Sigmoid colon (tissue), 7 donors: ENCODE measurements at regions of chr11 and their contacts with region 1.

Region 1: DNA sequence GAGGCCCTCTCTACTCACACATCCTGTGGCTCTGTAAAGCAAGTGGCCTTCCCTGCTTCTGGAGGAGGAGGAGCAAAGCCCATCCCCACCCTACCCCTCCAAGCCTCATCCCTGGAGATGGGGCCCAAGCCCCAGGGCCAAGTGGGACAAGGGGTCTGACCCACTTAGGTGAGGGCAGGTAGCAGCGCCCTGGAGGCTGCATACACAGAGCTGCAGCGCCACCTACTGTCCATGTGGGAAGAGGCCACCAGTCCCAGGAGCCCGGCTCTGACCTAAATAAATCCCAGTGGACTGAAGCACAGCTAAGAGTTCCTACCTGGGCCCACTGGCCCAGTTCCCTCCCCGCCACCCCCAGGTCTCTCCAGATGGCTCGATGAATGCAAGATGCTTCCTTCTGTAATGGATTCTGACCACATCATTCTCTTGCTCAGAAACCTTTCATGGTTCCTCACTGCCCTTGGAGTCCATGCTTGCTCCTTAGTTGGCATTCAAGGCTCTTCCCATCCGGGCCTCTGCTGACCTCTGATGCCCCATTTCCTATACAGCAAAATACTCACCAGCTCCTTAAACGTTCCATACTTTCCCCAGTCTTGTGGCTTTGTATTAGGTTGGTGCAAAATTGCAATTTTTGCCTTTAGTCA is 62.1 kb downstream of the THAP12 start:
- DNase-seq: peak; percentile 89
- H3K4me3 ChIP-seq: no peak overlapping the region
- H3K27ac ChIP-seq: no peak overlapping the region
- H3K4me1 ChIP-seq: peaks cover 0 to 7% (median 3%) of the 10 kb centered on the region in 4 donors
- H3K27me3 ChIP-seq: peaks cover 11 to 25% (median 19%) of the 10 kb centered on the region in 3 donors
- CTCF ChIP-seq: peak; percentile 64 to 96 (median 92)
- EP300 ChIP-seq: no peak
- POLR2A ChIP-seq: no peak

Region 2: GRCh38 chr11:75797792-75798191 is 521.1 kb before region 1 on chr11:
- intact Hi-C with region 1: loop called (anchors 10 kb)
- DNase-seq: no peak
- H3K4me3 ChIP-seq: no peak overlapping the region
- H3K27ac ChIP-seq: no peak overlapping the region
- H3K4me1 ChIP-seq: no peaks in the 10 kb centered on the region
- H3K27me3 ChIP-seq: no peaks in the 10 kb centered on the region
- CTCF ChIP-seq: no peak
- EP300 ChIP-seq: no peak
- POLR2A ChIP-seq: no peak

Region 3: DNA sequence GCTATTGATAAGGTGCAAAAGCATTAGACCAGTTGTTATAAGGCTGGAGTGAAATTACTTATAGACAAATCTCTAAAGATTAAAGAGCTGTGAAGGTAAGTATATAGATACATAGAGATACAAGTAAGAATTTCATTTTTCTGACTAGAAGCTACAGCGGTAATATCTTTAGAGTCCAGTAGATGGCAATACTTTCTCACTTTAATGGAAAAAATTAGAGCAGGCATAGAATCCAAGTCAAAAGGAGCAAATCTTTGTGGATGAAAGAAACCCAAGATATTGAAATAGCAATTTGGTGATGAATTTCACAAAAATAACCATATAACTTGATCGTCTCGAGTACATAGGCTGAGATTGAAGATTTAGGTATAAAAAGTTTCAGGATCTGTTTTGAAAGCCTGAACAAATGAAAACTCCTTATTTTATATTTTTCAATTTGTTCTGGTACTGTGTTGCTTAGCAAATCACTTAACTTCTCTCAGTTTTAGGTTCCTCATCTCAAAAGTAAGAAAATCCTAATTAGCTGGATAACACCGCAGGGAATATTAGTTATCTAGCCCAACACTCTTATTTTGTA is 421.9 kb before region 1 on chr11:
- intact Hi-C with region 1: loop called (anchors 2 kb)
- DNase-seq: no peak
- H3K4me3 ChIP-seq: no peak overlapping the region
- H3K27ac ChIP-seq: no peak overlapping the region
- H3K4me1 ChIP-seq: peaks cover 0 to 30% (median 23%) of the 10 kb centered on the region in 4 donors
- H3K27me3 ChIP-seq: no peaks in the 10 kb centered on the region
- CTCF ChIP-seq: peak; percentile 47 to 74 (median 71)
- EP300 ChIP-seq: no peak
- POLR2A ChIP-seq: no peak

Region 4: DNA sequence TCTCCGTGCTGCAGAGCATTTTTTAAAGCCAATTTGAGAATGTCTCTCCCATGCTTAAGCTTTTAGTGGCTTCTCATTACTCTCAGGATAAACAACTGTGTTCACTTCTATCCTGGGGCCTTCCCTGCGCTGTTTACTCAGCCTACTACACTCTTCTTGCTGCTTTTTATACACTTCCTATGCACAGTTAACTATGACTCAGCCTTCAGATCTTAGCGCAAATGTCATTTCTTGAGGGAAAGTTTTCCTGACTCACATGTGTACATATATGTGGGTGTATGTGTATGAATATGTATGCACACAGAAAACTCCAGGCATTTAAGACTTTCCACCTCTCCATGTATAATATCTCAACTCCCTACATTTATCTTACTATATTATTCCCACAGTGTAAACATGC is 52.3 kb after region 1 on chr11:
- intact Hi-C with region 1: no loop called
- DNase-seq: no peak
- H3K4me3 ChIP-seq: no peak overlapping the region
- H3K27ac ChIP-seq: no peak overlapping the region
- H3K4me1 ChIP-seq: peaks cover 0 to 26% (median 14%) of the 10 kb centered on the region in 4 donors
- H3K27me3 ChIP-seq: no peaks in the 10 kb centered on the region
- CTCF ChIP-seq: no peak
- EP300 ChIP-seq: no peak
- POLR2A ChIP-seq: no peak